ENCODE measurements at regions of chr14 and their contacts with region 1.

Region 1: GRCh38 chr14:22052795-22053194 is 379.2 kb upstream of the OR4E1 start:
- DNase-seq: peak; percentile 53
- ATAC-seq: peak; percentile 93
- H3K4me3 Mint-ChIP-seq: peak overlapping the region; percentile 63
- H3K27ac Mint-ChIP-seq: peak overlapping the region; percentile 93
- H3K4me1 Mint-ChIP-seq: peaks cover 34% of the 10 kb centered on the region
- H3K27me3 Mint-ChIP-seq: no peaks in the 10 kb centered on the region

Region 2: DNA sequence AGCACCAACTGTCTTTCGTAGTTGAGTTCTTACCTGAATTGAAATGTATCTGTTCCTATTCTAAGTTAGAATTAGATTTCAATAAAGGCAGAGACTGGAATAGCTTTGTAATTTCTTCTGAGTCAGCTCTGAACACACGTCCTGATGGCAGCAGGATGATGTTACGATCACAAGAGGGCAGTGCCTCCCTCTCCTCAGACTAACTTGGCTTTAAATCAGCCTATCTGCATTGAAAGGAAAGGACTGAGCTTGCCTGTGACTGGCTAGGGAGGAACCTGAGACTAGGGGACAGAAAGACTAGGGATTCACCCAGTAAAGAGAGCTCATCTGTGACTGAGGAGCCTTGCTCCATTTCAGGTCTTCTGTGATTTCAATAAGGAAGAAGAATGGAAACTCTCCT is 55.5 kb before region 1 on chr14:
- CTCF ChIA-PET with region 1: no interaction called
- POLR2A ChIA-PET with region 1: no interaction called
- intact Hi-C with region 1: no loop called
- DNase-seq: peak; percentile 54
- ATAC-seq: peak; percentile 93
- H3K4me3 Mint-ChIP-seq: peak overlapping the region; percentile 85
- H3K27ac Mint-ChIP-seq: peak overlapping the region; percentile 96
- H3K4me1 Mint-ChIP-seq: peaks cover 27% of the 10 kb centered on the region
- H3K27me3 Mint-ChIP-seq: no peaks in the 10 kb centered on the region

Region 3: GRCh38 chr14:22070119-22071011 is 17.6 kb after region 1 on chr14:
- CTCF ChIA-PET with region 1: interaction called, 8 read pairs
- POLR2A ChIA-PET with region 1: no interaction called
- intact Hi-C with region 1: loop called in 1 of 2 experiments (anchors 2 kb)
- DNase-seq: peak; percentile 72
- ATAC-seq: peak; percentile 89
- H3K4me3 Mint-ChIP-seq: peak overlapping the region; percentile 79
- H3K27ac Mint-ChIP-seq: peak overlapping the region; percentile 89
- H3K4me1 Mint-ChIP-seq: peaks cover 34% of the 10 kb centered on the region
- H3K27me3 Mint-ChIP-seq: no peaks in the 10 kb centered on the region

Region 4: DNA sequence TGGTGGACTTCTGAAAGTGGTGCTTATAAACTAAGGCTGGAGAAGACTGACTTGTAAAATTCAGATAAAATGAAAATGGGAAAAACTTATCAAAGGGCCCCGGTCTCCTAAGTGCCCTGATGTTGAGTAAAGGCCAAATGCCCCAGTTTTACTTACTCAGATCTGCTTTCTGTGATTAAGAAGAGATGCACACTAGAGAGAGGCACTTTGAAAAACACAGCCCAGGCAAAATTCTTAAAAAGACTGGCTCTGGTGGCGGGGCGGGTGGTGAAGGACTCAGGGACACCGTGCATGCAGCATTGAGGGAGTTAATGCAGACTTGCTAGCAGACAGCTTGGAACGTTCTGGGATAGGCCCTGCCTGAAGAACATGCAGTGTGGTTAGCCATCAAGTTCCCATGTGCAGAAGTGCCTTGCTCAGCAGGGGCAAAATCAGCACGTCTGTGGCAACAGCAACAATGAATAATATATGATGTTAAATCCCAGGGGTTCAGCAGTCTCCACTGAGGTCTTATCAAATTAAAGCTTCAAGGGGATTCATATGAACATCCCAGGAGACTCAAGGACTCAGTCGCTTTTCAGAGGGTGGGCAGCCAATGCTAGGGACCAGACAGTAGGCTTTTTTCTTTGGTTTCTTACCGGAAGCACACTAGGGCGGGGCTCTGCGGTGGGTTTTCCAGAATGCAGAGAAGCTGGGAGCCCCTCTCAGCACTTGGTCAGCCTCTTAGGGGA is 431.2 kb after region 1 on chr14:
- CTCF ChIA-PET with region 1: no interaction called
- POLR2A ChIA-PET with region 1: no interaction called
- intact Hi-C with region 1: loop called in 1 of 2 experiments (anchors 5 kb)
- DNase-seq: peak; percentile 36
- ATAC-seq: peak; percentile 20
- H3K4me3 Mint-ChIP-seq: peak overlapping the region; percentile 84
- H3K27ac Mint-ChIP-seq: peak overlapping the region; percentile 99
- H3K4me1 Mint-ChIP-seq: no peaks in the 10 kb centered on the region
- H3K27me3 Mint-ChIP-seq: no peaks in the 10 kb centered on the region